ENCODE measurements at regions of chr19 and their contacts with region 1.

Region 1: DNA sequence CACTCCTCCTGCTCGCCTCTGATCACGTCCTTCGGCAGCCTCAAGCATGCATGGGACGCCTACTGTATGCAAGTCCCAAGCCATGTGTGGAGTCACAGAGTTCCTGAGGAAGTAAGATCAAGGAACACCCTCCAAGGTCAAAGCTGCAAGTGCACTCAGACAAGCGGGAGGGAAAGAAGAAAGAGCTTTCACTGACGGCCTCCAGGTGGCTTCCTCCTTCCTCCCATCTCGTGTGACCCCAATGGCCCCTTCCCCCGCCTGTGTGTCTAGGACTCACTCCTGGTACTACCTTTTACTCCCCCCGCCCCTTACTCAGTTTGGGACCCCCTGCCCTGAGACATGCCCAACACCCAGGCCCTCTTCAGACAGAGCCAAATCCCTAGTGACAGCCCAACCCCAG is 6.0 kb downstream of the HAUS8 start:
- DNase-seq: no peak
- H3K4me3 ChIP-seq: no peak overlapping the region
- H3K4me3 Mint-ChIP-seq: no peak overlapping the region
- H3K27ac ChIP-seq: peak overlapping the region in 1 of 2 donors; percentile 18
- H3K27ac Mint-ChIP-seq: peak overlapping the region in 3 of 7 donors; percentile 68 to 80 (median 79)
- H3K4me1 ChIP-seq: peaks cover 18% of the 10 kb centered on the region in 2 donors
- H3K4me1 Mint-ChIP-seq: peaks cover 45% of the 10 kb centered on the region
- H3K27me3 ChIP-seq: no peaks in the 10 kb centered on the region
- H3K27me3 Mint-ChIP-seq: peaks cover 0 to 5% (median 2%) of the 10 kb centered on the region in 3 donors
- CTCF ChIP-seq: no peak

Region 2: GRCh38 chr19:17183858-17184321 is 114.7 kb after region 1 on chr19:
- intact Hi-C with region 1: loop called in 1 of 2 experiments (anchors 5 kb)
- DNase-seq: peak; percentile 36 to 64 (median 42)
- H3K4me3 ChIP-seq: peak overlapping the region in 1 of 3 experiments; percentile 61
- H3K4me3 Mint-ChIP-seq: peak overlapping the region; percentile 75 to 89
- H3K27ac ChIP-seq: peak overlapping the region; percentile 69 to 75
- H3K27ac Mint-ChIP-seq: peak overlapping the region; percentile 87 to 96 (median 93)
- H3K4me1 ChIP-seq: peaks cover 24 to 29% of the 10 kb centered on the region in 2 donors
- H3K4me1 Mint-ChIP-seq: peaks cover 30% of the 10 kb centered on the region
- H3K27me3 ChIP-seq: no peaks in the 10 kb centered on the region
- H3K27me3 Mint-ChIP-seq: peaks cover 0 to 3% (median 0%) of the 10 kb centered on the region in 3 donors
- CTCF ChIP-seq: no peak